ENCODE measurements at regions of chr9 and their contacts with region 1.

Region 1: DNA sequence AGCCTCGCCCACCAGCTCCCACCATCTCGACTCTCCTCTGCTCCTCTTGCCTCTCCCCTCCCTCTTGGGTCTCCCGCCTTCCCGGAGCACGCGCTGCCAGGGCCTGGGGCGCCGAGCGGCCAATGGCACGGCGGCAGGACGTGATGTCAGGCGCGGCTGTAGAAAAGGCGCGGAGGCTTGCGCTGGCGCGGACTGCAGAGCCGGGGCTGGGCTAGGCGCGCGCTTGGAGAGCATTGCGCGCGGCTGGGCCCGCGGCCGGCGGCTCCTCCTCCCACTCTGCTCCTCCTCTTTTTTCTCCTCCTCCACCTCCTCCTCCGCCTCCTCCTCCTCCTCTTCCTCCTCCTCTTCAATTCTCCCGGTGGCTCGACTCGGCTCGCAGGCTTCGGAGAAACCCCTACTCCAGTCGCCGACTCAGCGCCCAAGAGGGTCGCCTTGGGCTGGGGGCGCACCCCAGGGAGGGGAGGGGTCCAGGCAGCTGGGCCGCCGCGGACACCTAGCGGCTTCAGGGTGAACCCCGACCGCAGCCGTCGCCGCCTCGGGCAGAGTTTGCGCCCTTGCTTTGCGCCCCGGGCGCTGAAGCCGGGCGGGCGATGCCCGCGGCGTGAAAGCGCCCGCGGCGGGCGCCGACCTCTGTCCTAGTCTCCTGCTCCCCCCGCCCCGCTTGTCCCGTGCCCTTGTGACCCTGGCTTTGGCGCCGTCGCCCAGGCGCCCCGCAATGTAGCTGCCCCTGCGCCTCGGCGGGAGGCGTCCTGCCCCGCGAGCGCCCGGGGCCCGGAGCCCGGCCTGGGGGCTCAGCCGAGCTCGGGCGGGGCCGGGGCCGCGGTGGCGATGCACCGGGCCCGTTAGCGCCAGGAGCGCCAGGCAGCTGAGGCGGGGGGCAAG is at the start of gene LHX2:
- DNase-seq: peak; percentile 68
- H3K4me3 ChIP-seq: peak within 1 kb of the TSS in 2 of 3 experiments; percentile 36 to 43
- H3K27ac ChIP-seq: no peak within 1 kb of the TSS
- H3K4me1 ChIP-seq: peaks cover 3% of the 10 kb centered on the region
- H3K27me3 ChIP-seq: peaks cover 91% of the 10 kb centered on the region
- CTCF ChIP-seq: no peak
- total RNA-seq, gene LHX2: not detected

Region 2: GRCh38 chr9:124079176-124079925 is 67.7 kb after region 1 on chr9:
- CTCF ChIA-PET with region 1: no interaction called
- dilution Hi-C with region 1: loop called (anchors 5 kb)
- in situ Hi-C with region 1: no loop called
- intact Hi-C with region 1: no loop called
- DNase-seq: no peak
- H3K4me3 ChIP-seq: no peak overlapping the region
- H3K27ac ChIP-seq: no peak overlapping the region
- H3K4me1 ChIP-seq: peaks cover 18% of the 10 kb centered on the region
- H3K27me3 ChIP-seq: no peaks in the 10 kb centered on the region
- CTCF ChIP-seq: no peak